Posterior vena cava (tissue), 2 donors: ENCODE measurements at regions of chr9 and their contacts with region 1.

Region 1: GRCh38 chr9:120875954-120876841 is 790 bp downstream of the PHF19 start:
- DNase-seq: peak; percentile 96

Region 2: DNA sequence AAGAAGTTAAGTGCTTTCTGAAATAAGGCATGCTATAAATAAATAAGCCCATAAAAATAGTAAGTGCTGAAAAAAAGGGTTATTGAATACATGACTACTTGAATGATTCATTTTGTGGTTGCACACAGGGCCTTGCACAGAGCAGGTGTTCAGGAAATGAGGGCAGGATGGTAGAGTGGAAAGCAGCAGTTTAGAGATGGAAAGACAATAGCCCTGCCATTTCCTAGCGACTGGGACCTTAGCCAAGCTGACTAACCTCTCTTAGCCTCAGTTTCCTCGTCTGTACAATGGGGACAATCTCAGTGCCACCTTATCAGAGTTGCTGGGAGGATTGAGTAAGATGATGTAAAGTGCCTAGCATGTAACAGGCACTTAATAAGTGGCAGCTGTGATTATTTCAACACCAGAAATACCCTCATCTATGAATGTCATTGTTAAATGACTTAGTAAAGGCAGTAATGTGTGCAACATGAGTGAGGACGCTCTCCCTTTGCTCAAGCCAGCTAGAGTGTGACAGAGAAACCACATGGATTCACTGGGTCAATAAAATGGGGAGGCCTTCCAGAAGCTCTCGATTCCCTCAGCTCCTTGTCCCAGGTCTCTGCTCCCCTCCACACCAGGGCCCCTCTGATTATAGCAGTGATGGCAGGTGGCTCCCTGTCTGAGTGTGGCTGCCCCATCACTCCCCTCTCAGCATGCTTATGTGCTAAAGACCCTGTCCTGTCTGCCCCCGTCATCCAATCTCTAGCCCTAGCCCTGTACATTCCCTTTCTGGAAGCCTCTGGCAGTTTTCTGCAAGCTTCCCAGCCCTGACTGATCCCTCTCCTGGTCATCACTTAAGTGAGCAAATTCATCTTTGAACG is 16.8 kb after region 1 on chr9:
- intact Hi-C with region 1: loop called in 1 of 2 experiments (anchors 1 kb)
- DNase-seq: no peak

Region 3: GRCh38 chr9:120898396-120898795 is 22.2 kb after region 1 on chr9:
- intact Hi-C with region 1: loop called in 1 of 2 experiments (anchors 1 kb)
- DNase-seq: no peak

Region 4: DNA sequence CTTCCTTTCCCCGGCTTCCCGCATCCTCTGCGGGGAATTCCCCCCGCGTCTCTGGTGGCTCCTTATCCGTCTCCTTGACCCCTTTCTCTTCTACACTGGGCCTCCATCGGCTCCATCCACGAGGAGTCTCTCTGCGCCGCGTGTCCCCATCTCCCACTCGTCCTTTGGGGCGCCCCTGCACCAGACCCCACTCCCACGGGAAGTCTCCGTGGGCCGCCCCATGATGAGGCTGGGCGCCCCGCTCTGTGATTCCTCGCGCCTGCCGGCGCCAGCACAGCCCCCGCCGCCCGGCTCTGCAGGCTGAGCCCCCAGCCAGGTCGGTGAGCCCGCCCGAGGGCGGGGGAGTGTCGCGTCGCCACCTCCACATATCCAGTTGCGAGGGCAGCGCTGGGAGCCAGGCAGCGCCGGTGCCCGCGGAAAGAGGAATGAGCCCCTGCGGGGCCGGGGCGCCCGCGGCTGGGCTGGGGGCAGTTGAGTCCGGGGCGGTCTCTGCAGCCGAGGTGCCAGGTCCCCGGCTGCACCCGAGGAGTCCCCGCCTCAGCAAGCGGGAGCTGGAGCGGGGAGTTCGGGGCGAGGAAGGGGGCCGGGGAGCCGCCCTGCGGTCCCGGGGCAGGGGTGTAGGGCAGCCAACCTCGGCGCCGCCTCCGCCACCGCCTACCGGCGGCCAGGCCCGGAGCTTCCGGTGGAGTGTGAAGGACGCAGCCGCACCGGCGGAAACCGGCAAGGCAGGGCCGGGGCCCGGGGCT is 52.5 kb after region 1 on chr9:
- intact Hi-C with region 1: loop called in 1 of 2 experiments (anchors 5 kb)
- DNase-seq: peak; percentile 90

Region 5: DNA sequence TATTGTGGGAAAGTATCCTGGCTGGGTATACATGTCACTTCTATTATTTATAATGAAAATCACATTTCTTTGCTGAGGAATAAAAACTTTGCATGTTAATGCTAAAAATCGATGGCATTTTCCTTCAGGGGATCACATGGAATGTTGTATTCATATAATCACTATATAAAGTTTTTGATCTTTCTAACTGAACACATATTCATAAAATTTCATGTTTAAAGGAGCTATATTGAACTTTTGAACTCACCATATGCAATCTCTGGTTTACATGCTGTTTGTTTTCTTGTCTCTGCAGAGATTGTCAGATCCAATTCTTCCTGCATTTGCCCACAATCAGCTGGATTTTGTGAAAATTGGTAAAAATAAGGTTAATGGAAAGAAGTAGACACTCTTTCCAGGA is 83.8 kb after region 1 on chr9:
- intact Hi-C with region 1: no loop called
- DNase-seq: no peak

Region 6: DNA sequence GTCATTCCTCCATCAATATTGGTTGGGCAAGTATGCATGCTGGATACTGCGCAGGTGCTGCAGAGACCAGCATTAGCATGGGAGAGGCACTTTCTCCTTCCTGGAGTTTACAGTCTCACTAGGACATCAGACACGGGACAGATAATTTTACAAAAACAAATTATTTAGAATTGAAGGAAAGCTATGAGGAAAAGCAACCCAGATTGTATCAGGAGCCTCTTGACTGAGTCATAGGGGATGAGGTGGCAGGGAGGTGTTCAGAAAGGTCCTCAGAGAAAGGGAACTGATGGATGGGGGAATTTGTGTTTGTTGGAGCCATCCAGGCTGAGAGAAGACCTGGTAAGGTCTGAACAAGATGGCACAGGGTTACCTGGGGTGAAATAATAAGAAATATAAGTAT is 350.0 kb after region 1 on chr9:
- intact Hi-C with region 1: no loop called
- DNase-seq: no peak